ENCODE measurements at regions of chr6 and their contacts with region 1.

Region 1: GRCh38 chr6:88870717-88871330 is 92.6 kb downstream of the RNGTT start:
- DNase-seq: peak; percentile 17
- H3K4me3 Mint-ChIP-seq: no peak overlapping the region
- H3K27ac Mint-ChIP-seq: no peak overlapping the region
- H3K4me1 Mint-ChIP-seq: peaks cover 25% of the 10 kb centered on the region
- H3K27me3 Mint-ChIP-seq: no peaks in the 10 kb centered on the region

Region 2: GRCh38 chr6:87393022-87393622 is 1477.7 kb before region 1 on chr6:
- CTCF ChIA-PET with region 1: interaction called, 16 read pairs
- POLR2A ChIA-PET with region 1: no interaction called
- intact Hi-C with region 1: no loop called
- DNase-seq: peak; percentile 49
- H3K4me3 Mint-ChIP-seq: no peak overlapping the region
- H3K27ac Mint-ChIP-seq: no peak overlapping the region
- H3K4me1 Mint-ChIP-seq: no peaks in the 10 kb centered on the region
- H3K27me3 Mint-ChIP-seq: no peaks in the 10 kb centered on the region

Region 3: DNA sequence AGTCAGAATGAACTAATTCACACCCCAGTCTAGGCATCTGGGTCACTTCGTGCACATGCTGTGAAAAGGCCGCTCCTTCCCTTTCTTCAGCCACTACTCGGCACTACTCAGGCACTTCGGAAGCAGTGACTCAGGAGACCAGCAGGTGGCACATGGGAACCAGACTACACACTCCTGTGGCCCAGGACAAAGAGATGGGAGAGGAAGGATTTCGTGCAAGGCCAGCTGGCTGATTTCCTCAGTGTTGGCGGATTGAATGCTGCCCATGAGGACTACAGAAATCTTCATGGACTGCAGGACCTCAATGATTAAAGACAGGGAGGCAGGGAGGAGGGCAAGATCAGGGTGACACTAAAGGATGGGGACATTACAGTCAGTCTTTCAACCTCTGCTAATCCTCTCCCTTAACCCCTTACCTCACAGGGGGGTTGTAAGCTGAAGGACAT is 941.0 kb before region 1 on chr6:
- CTCF ChIA-PET with region 1: interaction called, 11 read pairs
- POLR2A ChIA-PET with region 1: no interaction called
- intact Hi-C with region 1: loop called (anchors 1 kb)
- DNase-seq: peak; percentile 74
- H3K4me3 Mint-ChIP-seq: no peak overlapping the region
- H3K27ac Mint-ChIP-seq: no peak overlapping the region
- H3K4me1 Mint-ChIP-seq: no peaks in the 10 kb centered on the region
- H3K27me3 Mint-ChIP-seq: peaks cover 2% of the 10 kb centered on the region

Region 4: DNA sequence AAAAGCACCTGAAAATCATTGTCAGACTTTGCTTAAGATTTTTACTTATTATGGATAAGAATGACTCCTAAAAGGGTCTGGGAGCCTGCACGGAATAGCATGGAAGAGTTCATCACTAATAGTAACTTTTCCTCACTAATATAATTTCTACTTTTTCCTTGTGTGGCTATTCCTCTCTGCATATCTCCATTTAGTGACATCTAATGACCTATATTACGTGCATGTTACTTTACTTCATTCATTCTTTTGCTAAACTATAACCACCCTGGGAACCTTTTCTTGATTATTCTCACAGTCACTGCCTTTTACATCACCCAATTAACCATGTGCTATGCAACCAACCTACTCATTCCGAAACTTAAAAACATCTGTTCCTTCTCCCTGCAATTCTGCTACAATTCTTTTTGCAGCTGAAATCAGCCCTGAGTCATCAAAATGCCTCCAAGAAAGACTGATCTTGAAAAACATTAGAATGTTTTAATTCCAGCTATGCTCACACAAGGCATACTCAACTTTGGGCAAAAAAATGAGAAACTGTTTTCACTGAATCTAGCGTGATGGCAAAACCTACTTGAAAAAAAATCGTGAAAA is 220.7 kb before region 1 on chr6:
- CTCF ChIA-PET with region 1: no interaction called
- POLR2A ChIA-PET with region 1: no interaction called
- intact Hi-C with region 1: loop called (anchors 10 kb)
- DNase-seq: no peak
- H3K4me3 Mint-ChIP-seq: no peak overlapping the region
- H3K27ac Mint-ChIP-seq: no peak overlapping the region
- H3K4me1 Mint-ChIP-seq: peaks cover 7% of the 10 kb centered on the region
- H3K27me3 Mint-ChIP-seq: no peaks in the 10 kb centered on the region

Region 5: DNA sequence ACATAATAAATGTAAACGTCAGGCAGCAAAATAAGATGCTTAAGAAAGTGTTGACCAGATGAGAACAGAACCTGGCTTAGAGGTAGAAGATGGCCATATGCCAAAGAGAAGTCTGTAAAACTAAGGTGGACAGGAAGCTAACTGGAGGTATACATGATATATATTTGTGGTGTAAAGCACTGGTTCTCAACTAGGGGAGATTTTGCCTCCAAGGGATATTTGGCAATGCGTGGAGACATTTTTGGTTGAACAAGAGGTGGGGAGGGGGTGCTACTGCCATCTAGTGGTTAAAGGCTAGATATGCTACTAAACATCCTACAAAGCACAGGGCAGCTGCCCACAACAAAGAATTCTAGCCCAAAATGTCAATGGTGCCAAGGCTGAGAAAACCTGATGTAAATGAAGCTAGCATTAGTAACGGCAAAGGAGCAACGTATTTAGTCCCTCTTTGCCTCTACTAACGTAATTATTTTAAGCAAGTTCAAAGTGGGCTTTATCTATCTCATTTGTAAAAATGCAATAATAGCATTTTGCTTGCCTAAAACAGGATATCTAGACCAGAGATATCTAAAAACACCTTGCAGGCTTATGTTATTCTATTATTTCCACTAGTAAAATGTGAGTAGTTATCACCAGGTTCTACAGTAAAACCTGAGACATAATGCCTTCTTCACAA is 90.0 kb before region 1 on chr6:
- CTCF ChIA-PET with region 1: interaction called, 11 read pairs
- POLR2A ChIA-PET with region 1: no interaction called
- intact Hi-C with region 1: loop called (anchors 5 kb)
- DNase-seq: peak; percentile 55
- H3K4me3 Mint-ChIP-seq: no peak overlapping the region
- H3K27ac Mint-ChIP-seq: no peak overlapping the region
- H3K4me1 Mint-ChIP-seq: peaks cover 13% of the 10 kb centered on the region
- H3K27me3 Mint-ChIP-seq: no peaks in the 10 kb centered on the region

Region 6: DNA sequence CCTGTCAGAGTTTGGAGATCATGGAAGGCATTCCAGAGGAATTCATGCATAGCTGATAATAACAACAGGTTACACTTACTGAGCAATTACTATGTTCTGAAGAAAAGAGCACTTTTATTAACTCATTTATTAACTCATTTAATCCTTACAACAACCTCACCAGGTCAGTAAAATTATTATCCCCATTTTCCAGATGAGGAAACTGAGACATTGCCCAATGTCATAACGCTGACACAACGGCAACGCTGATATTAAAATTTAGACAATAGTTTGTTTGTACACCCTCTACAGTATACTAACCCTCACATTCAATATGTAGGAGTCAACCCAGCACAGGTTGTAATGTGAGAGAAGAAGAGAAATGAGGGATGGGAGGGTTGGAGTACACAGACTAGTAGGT is 12.4 kb before region 1 on chr6:
- CTCF ChIA-PET with region 1: interaction called, 10 read pairs
- POLR2A ChIA-PET with region 1: no interaction called
- intact Hi-C with region 1: no loop called
- DNase-seq: no peak
- H3K4me3 Mint-ChIP-seq: no peak overlapping the region
- H3K27ac Mint-ChIP-seq: no peak overlapping the region
- H3K4me1 Mint-ChIP-seq: no peaks in the 10 kb centered on the region
- H3K27me3 Mint-ChIP-seq: no peaks in the 10 kb centered on the region